PC-9 (cell line): ENCODE measurements at regions of chr7 and their contacts with region 1.

Region 1: DNA sequence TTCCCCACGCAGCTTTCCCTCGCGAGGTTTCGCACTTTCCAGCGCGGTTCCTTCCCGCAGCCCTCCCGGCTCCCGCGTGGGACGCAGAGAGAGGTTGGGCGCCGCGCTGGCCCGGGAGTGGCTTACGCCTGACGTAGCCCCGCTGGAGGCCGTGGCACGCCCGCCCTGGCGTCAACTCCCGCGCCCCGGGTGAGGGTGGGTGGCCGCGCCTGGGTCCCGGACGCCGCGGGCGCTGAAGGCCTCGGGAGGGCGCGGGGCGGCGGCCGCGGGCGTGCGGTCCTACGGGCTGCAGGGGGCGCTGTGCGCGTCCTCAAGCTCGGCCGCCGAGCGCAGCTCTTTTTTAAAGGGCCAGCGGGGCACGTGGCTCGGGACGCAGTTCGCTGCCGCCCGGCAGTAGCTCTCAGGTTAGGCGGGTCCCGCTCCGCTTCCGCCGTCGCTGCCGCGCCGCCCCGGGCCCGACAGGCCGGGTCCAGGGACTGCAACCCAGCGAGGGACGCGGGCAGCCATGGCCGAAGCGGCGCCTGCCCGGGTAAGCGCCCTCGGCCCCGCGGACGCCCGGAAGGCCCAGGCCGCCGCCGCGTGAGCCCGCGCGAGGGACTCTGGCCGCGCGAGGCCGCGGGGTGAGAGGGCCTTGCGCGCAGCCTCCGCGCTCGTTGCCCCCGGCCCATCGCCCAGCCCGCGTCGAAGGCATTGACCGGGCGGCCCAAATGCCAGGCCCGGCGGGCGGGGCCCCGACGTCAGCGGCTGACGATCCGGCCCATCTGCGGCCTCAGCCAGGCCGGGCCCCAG is at the start of gene ZNF783:
- DNase-seq: peak; percentile 74 to 90
- H3K4me3 ChIP-seq: peak within 1 kb of the TSS; percentile 89
- H3K27ac ChIP-seq: peak within 1 kb of the TSS; percentile 74
- H3K4me1 ChIP-seq: peaks cover 16% of the 10 kb centered on the region; the same call in 1 of the 2 replicates
- H3K27me3 ChIP-seq: no peaks in the 10 kb centered on the region
- CTCF ChIP-seq: peak; percentile 68
- total RNA-seq, gene ZNF783: 15.8 and 22.2 TPM in 2 replicates

Region 2: DNA sequence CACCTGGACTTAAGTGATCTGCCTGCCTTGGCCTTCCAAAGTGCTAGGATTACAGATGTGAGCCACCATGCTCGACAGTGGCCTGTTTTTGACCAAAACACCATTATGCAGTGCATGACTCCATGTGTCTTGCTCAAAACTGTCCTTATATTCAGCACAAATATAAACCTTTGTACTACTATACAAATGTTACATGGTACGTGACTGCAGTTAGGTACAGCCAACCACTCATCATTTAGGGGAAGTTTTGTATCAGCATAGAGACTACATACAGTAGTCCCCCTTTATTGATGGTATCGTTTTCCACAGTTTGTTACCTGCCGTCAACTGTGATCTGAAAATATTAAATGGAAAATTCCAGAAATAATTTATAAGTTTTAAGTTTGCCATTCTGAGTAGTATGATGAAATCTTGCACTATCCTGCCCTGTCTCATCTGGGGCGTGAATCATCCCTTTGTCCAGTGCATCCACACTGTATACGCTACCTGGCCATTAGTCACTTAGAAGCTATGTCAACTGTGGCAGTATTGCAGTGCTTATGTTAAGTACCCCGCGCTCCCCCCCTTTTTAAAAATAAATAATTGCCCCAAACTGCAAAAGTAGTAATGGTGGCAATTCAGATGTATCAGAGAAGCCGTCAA is 90.0 kb before region 1 on chr7:
- CTCF ChIA-PET with region 1: no interaction called
- POLR2A ChIA-PET with region 1: no interaction called
- intact Hi-C with region 1: no loop called
- DNase-seq: peak; percentile 17 to 79
- H3K4me3 ChIP-seq: no peak overlapping the region
- H3K27ac ChIP-seq: peak overlapping the region; percentile 96
- H3K4me1 ChIP-seq: peaks cover 17% of the 10 kb centered on the region
- H3K27me3 ChIP-seq: no peaks in the 10 kb centered on the region
- CTCF ChIP-seq: no peak

Region 3: DNA sequence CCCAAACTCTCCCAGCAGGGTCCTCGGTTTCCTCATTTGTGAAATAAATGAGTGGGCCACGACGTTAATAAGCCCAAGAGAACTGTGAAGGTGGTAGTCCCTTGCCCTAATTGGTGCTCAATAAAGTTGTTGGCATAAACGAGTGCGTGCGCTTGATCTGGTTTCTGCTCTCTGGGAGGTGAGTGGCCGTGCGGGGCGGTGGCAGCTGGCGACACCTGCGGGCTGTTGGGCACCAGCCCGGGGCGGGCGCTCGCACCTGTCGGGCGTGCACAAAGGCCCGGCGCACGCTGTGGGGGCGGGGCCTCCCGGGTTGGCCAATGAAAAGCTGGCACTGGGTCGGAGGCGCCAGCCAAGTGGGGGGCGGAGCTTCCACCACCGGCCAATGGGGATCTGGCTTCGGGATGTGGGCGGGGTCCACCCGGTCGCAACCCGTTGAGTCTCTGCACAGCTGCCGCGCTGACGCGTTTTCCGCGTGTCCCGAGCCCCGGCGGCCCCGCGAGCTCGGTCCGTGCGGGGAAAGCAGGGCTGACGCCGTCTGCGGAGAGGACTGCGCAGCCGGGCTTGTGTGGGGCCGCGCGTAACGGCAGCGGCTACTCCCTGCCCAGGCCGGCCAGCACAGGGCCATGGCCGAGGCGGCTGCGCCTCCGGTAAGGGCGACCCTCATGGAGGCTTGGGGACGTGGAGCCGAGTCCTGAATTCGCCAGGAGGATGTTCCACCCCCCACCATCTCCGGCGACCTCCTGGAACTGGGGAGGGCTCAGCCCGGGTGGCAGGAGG is 23.0 kb after region 1 on chr7:
- CTCF ChIA-PET with region 1: interaction called, 10 read pairs
- POLR2A ChIA-PET with region 1: interaction called, 7 read pairs
- intact Hi-C with region 1: no loop called
- DNase-seq: peak; percentile 90 to 100
- H3K4me3 ChIP-seq: peak overlapping the region; percentile 62
- H3K27ac ChIP-seq: no peak overlapping the region
- H3K4me1 ChIP-seq: peaks cover 25% of the 10 kb centered on the region
- H3K27me3 ChIP-seq: no peaks in the 10 kb centered on the region
- CTCF ChIP-seq: no peak